ENCODE measurements at regions of chr14 and their contacts with region 1.

Region 1: GRCh38 chr14:20327005-20327869 is 5.8 kb downstream of the CCNB1IP1 start:
- DNase-seq: no peak
- ATAC-seq: peak; percentile 80
- H3K4me3 ChIP-seq: no peak overlapping the region
- H3K27ac ChIP-seq: peak overlapping the region; percentile 6
- H3K4me1 ChIP-seq: peaks cover 19% of the 10 kb centered on the region
- H3K27me3 ChIP-seq: no peaks in the 10 kb centered on the region
- CTCF ChIP-seq: peak; percentile 83

Region 2: DNA sequence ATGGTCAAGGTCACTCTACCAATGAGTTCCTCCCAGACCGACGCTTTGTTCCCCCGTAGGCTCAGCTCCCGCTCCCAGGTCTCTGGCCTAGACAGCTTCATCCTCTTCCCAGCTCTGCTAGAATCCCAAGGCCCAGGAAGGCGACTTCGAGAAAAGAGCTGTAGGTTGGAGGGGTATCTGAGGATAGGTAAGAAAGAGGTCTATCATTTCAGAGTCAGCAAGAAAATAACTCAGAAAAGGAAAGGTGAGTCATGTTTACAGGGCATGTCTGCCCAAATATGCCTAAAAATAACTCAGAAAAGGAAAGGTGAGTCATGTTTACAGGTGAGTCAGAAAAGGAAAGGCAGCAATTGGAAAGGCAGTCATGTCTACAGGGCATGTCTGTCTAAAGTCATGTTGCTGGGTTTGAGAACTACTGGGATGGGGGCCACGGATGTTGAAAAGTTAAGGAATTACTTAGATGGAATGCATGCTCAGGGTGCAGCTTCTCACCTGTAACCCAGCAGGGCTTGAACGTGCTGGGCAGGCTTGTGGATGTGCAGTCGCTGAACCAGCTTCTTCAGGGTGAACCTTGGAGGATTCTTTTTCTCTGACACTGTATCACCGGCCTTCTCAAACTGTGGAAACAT is 73.8 kb after region 1 on chr14:
- intact Hi-C with region 1: no loop called
- DNase-seq: no peak
- ATAC-seq: no peak
- H3K4me3 ChIP-seq: no peak overlapping the region
- H3K27ac ChIP-seq: no peak overlapping the region
- H3K4me1 ChIP-seq: no peaks in the 10 kb centered on the region
- H3K27me3 ChIP-seq: no peaks in the 10 kb centered on the region
- CTCF ChIP-seq: no peak

Region 3: DNA sequence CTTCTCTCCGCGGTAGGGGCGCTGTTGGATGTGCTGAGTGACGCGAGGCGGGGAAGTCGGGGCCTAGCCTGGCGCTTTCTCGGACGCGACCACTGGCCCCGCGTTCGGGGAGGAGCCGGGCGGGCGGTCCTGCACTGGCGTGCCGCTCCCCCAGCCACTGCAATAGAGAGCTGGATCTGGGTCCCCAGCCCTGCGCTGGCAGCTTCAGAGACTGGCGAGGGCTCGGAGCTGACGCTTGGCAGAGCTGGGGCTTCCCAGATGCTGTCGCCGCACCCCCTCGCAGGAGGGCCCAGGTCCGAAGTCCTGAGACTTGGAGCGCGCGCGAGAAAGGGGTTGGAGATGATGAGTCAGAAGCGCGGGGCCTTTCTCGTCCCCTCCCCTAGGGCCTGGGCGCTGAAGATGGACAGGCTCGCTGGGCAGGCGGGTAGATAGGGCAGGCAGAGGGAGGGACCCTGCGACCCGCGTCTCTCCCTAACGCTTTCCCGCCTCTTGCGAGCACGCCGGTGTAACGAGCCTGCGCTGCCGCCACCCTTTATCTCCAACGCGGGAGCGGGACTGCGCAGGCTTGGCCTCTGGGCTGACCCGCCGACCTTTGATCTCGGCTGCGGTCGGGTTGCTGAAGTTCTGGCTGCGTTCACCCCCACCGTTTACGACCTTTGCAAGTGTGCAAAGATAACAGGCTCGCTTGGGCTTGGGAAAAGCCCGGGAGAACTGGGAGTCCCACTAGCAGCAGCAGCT is 776.6 kb after region 1 on chr14:
- intact Hi-C with region 1: loop called (anchors 10 kb)
- DNase-seq: peak; percentile 97
- ATAC-seq: peak; percentile 94
- H3K4me3 ChIP-seq: peak overlapping the region; percentile 81
- H3K27ac ChIP-seq: peak overlapping the region; percentile 99
- H3K4me1 ChIP-seq: peaks cover 44% of the 10 kb centered on the region
- H3K27me3 ChIP-seq: no peaks in the 10 kb centered on the region
- CTCF ChIP-seq: peak; percentile 78